ENCODE measurements at regions of chr13 and their contacts with region 1.

Region 1: DNA sequence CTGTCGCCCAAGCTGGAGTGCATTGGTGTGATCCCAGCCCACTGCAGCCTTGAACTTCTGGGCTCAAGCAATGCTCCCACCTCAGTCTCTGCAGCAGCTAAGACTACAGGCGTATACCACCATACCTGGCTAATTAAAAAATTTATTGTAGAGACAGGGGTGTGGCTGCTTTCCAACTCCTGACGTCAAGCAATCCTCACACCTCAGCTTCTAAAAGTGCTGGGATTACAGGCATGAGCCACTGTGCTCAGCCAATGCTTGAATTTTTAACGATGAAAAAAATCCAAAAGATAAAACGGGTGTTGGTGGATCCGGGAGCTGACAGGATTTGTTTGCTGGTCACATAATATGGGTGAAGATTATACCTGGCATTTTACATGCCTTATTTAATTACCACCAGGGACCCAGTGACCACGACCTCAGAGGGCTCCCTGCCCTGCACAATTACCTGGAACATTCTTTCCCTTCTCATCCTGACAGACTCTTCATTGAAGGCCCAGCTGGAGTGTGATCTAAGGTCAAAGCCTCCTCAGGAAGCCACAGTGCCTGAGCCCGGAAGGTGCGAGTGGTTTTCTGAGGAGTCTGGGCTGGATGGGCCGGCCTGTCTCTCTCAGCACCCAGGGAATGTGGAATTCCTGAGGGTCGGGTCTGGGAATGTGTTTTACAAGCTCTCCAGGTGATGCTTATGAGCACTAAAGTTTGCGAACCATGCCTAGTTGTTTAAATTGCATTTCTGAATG is 193.4 kb downstream of the USP12 start:
- DNase-seq: peak; percentile 84 to 94
- H3K4me3 ChIP-seq: no peak overlapping the region
- H3K4me3 Mint-ChIP-seq: peak overlapping the region; percentile 12
- H3K27ac Mint-ChIP-seq: peak overlapping the region; percentile 80
- H3K4me1 ChIP-seq: peaks cover 77% of the 10 kb centered on the region
- H3K4me1 Mint-ChIP-seq: peaks cover 69% of the 10 kb centered on the region
- H3K27me3 ChIP-seq: no peaks in the 10 kb centered on the region
- H3K27me3 Mint-ChIP-seq: no peaks in the 10 kb centered on the region
- CTCF ChIP-seq: no peak

Region 2: DNA sequence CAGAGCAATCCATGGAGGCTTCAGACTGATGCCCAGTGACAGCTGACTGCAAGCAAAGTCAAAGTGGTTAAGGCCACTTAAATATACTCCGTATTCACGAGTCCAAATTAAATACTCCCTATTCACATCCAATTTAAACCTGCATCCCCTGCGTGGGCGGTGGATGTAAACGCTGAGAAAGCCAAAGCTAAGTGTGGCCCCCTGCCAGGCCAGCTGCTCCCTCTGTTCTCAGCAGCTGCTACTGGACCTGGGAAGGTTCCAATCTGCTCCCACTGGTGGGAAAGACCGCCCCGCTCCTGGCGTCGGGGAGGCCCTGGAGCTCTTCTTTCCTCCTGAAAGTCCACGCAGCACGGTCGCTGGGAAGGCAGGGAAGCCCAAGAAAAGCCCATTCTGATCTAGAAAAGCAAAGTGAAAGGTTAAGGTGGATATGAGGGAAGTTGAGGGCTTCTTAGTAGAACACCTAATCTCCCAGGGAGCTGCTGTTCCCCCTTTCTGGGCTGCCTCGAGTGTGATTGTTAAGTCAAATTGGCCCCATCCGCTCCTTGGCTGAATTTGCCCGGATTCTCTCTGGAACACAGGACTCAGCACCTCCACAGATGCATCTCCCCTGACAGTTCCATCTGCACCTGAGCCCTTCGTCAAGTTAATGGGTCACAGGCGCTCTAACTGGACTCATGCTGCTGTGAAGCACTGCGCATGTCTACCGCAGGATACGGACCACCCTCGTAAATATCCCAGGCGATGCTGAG is 12.1 kb before region 1 on chr13:
- CTCF ChIA-PET with region 1: interaction called, 16 read pairs
- POLR2A ChIA-PET with region 1: interaction called, 9 read pairs
- intact Hi-C with region 1: loop called (anchors 1 kb)
- DNase-seq: no peak
- H3K4me3 ChIP-seq: no peak overlapping the region
- H3K4me3 Mint-ChIP-seq: no peak overlapping the region
- H3K27ac Mint-ChIP-seq: peak overlapping the region; percentile 92
- H3K4me1 ChIP-seq: peaks cover 84% of the 10 kb centered on the region
- H3K4me1 Mint-ChIP-seq: peaks cover 78% of the 10 kb centered on the region
- H3K27me3 ChIP-seq: no peaks in the 10 kb centered on the region
- H3K27me3 Mint-ChIP-seq: no peaks in the 10 kb centered on the region
- CTCF ChIP-seq: no peak

Measured in Caco-2 (cell line).